ENCODE measurements at regions of chr9 and their contacts with region 1.

Region 1: DNA sequence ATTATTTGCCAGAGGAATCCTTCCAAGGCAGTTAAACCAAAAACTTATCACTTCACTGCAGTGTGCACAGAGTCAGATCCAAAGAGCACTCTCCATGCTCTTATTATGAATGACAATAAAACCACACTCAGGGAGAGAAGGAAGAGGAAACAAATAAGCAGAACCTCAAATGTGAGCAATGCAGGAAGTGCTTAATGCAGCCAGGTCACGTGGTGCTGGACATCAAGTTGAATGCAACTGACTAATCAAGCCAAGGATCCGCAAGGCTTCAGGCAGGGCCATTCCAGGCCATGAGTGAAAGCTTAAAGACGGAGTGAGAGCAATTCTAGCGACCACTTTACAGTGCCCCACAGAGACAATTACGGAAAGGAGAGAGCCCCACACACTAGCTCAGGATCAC is 230.4 kb upstream of the PUM3 start:
- DNase-seq: no peak
- ATAC-seq: no peak
- H3K4me3 ChIP-seq: no peak overlapping the region
- H3K4me1 ChIP-seq: no peaks in the 10 kb centered on the region
- CTCF ChIP-seq: no peak

Region 2: GRCh38 chr9:3136686-3137346 is 62.6 kb after region 1 on chr9:
- intact Hi-C with region 1: loop called in 1 of 2 experiments (anchors 10 kb)
- DNase-seq: no peak
- ATAC-seq: no peak
- H3K4me3 ChIP-seq: no peak overlapping the region
- H3K4me1 ChIP-seq: no peaks in the 10 kb centered on the region
- CTCF ChIP-seq: no peak

Region 3: DNA sequence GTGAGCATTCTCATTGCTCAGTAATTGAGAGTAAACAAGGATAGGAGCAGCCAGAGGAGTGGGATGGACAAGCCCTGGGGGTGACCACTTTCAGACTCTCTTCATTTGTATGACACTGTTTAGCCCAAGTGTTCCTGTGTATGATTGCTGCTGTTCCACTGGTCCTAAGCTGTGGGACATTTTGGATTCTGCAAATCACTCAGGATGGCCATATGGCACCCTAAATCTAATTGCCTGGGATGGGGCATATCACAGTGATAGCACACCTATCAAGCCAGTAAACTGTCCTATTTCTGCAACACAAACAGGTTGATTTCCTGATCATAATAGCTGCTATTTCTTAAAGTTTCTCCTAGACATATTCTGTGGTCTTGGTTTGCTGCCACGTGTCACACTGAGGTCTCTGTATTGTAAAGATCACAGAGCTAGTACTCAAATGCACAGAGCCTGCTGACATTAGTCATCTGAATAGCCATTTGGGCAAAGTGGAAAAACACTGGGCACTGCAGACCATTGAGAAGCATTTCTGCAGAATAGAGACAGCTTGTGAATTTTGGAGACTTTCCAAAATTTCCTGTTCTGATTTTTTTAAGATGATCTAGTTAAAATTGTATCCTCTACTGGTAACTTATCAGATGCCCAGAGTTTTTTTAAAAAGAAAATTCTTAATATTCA is 131.3 kb after region 1 on chr9:
- intact Hi-C with region 1: no loop called
- DNase-seq: no peak
- ATAC-seq: no peak
- H3K4me3 ChIP-seq: no peak overlapping the region
- H3K4me1 ChIP-seq: no peaks in the 10 kb centered on the region
- CTCF ChIP-seq: no peak

Measured in mucosa of descending colon (tissue), 3 donors.